Posterior vena cava (tissue), 2 donors: ENCODE measurements at regions of chr6 and their contacts with region 1.

Region 1: DNA sequence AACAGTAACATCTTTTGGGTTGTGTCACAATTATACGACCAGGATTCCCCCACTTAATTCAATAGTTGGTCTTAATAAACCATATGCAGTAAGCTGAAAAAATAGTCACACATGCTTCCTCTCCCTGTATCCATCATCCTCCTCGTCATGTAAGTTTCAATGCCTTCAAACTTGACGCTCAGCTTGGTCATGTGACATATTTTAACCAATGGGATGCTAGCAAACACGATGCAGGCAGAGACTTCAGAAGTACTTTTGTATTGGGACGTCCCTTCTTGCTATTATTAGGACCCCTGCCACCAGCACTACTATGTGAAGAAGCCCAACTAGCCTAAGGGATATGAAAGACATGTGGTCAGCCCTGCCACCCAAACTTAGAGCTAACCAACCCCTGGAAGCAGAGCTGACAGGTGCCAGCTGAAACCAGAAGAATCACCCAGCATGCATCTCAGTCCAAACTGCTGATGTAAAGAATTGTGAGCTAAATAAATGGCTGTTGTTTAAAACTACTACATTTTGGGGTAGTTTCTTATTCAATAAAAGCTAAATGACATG is 49.3 kb downstream of the CGA start:
- DNase-seq: no peak

Region 2: DNA sequence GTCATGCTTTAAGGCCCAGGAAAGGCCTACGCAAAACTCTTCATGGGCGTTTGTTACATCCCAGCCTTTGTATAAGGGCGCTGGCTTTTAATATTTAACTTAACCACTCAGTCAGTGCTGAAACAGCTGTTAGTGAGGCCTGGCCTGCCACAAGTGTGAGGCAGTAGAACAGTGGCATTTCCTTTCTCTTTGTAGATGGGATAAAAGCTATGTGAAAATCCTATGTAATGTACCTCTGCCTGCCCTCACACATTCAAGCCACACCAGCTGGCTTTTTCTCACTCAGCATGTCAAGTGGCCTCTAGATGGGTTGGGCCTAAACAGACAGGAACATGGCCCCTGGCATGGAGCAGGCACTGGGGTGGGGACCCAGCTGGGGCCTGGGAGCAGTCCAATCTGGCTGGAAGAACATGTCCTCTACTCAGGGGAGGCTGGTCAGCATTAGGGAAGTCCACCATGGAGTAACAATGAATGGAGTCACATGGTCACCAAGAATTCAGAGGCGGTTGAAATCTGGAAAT is 28.6 kb after region 1 on chr6:
- intact Hi-C with region 1: loop called in 1 of 2 experiments (anchors 2 kb)
- DNase-seq: no peak